Prostate gland (tissue), 2 donors: ENCODE measurements at regions of chr14 and their contacts with region 1.

Region 1: DNA sequence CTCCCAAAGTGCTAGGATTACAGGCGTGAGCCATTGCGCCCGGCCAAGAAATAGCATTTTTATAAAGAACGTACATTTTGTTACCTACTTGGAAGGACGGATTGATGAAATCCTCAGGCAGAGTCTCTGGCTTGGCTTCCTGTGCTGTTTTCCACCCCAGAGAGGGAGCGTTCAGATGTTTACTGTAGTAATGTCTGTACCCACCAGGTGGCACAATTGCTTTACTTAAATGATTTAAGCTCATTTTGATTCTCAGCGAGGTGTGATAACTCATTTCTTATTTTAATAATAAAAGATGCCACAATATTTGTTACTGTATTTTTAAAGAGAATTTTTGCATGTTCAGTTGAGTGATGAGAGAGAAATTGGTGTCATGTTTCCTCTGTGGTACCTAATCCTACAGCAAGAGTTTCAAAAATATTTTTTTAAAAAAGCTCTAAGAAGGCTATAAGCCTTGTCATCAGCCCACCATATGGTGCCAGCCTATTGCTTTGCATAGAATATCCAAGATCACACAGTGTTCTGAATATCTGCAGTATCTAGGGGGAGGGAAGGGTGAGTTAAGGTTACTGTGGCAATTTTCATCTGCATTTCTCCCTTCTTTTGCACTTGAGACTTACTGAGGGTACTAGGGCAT is 82.6 kb upstream of the TRAF3 start:
- DNase-seq: peak; percentile 77
- H3K4me3 ChIP-seq: no peak overlapping the region
- H3K27ac ChIP-seq: no peak overlapping the region
- H3K4me1 ChIP-seq: peaks cover 7% of the 10 kb centered on the region
- H3K27me3 ChIP-seq: no peaks in the 10 kb centered on the region
- CTCF ChIP-seq: peak in 3 of 4 experiments; percentile 77 to 83 (median 78)
- POLR2A ChIP-seq: no peak

Region 2: DNA sequence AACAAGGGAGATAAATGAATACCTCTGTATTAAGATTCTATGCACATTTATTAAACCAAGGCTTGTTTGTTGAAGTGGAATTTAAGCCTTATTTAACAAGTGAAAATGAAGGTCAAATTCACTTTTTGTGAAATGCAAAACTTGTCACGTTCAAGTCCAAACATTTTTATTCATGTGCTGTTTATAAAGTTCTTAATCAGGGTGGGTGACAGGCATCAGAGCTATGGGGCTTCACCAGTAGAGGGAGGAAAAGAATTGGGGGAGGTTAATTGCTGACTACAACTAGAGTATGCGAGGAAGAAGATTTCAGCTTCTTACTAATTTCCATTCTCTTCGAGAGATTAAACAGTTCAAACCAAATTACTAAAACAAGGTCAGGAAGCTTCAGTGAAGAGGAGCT is 399.4 kb before region 1 on chr14:
- intact Hi-C with region 1: no loop called
- DNase-seq: no peak
- H3K4me3 ChIP-seq: no peak overlapping the region
- H3K27ac ChIP-seq: no peak overlapping the region
- H3K4me1 ChIP-seq: no peaks in the 10 kb centered on the region
- H3K27me3 ChIP-seq: no peaks in the 10 kb centered on the region
- CTCF ChIP-seq: no peak
- POLR2A ChIP-seq: no peak

Region 3: GRCh38 chr14:102524466-102525218 is 170.0 kb before region 1 on chr14:
- intact Hi-C with region 1: loop called (anchors 10 kb)
- DNase-seq: peak; percentile 98
- H3K4me3 ChIP-seq: peak overlapping the region; percentile 57 to 61
- H3K27ac ChIP-seq: peak overlapping the region; percentile 84 to 85
- H3K4me1 ChIP-seq: no peaks in the 10 kb centered on the region
- H3K27me3 ChIP-seq: no peaks in the 10 kb centered on the region
- CTCF ChIP-seq: peak; percentile 99
- POLR2A ChIP-seq: peak; percentile 64

Region 4: GRCh38 chr14:102917469-102918211 is 223.0 kb after region 1 on chr14:
- intact Hi-C with region 1: loop called (anchors 10 kb)
- DNase-seq: peak; percentile 31
- H3K4me3 ChIP-seq: no peak overlapping the region
- H3K27ac ChIP-seq: no peak overlapping the region
- H3K4me1 ChIP-seq: no peaks in the 10 kb centered on the region
- H3K27me3 ChIP-seq: no peaks in the 10 kb centered on the region
- CTCF ChIP-seq: peak; percentile 23 to 59 (median 54)
- POLR2A ChIP-seq: no peak

Region 5: DNA sequence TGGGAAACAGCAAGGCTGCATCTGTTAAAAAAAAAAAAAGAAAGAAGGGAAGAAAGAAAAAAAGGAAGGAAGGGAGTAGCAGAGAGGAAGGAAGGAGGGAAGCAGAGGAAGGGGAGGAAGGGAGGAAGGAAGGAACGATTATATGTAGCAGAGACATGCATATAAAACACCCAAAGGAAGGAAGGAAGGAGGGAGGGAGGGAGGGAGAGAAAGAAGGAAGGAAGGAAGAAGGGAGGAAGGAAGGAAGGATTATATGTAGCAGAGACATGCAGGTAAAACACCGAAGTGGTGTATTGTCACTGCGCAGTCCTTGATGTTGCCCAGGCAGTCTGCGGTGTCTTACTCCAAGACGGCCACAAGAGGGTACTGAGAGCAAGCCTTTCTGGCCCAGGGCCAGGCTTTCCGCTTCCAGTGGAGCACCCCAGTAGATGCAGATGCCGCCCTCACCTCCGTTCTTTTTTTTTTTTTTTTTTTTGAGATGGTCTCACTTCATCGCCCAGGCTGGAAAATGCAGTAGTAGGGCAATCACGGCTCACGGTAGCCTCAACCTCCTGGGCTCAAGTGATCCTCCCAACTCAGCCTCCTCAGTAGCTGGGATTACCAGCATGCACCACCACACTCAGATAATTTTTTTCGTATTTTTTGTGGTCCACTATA is 383.6 kb after region 1 on chr14:
- intact Hi-C with region 1: loop called (anchors 10 kb)
- DNase-seq: peak; percentile 76
- H3K4me3 ChIP-seq: no peak overlapping the region
- H3K27ac ChIP-seq: no peak overlapping the region
- H3K4me1 ChIP-seq: no peaks in the 10 kb centered on the region
- H3K27me3 ChIP-seq: no peaks in the 10 kb centered on the region
- CTCF ChIP-seq: peak; percentile 38 to 83 (median 62)
- POLR2A ChIP-seq: no peak